Heart left ventricle (tissue), 16 donors: ENCODE measurements at regions of chr1 and their contacts with region 1.

Region 1: GRCh38 chr1:180252638-180253536 is 22.8 kb downstream of the LHX4 start:
- DNase-seq: peak; percentile 63 to 86 (median 67)
- ATAC-seq: peak in 3 of 4 donors; percentile 51 to 56 (median 53)
- H3K4me3 ChIP-seq: no peak overlapping the region
- H3K27ac ChIP-seq: no peak overlapping the region
- H3K4me1 ChIP-seq: no peaks in the 10 kb centered on the region
- H3K27me3 ChIP-seq: peaks cover 0 to 56% (median 10%) of the 10 kb centered on the region in 9 donors
- CTCF ChIP-seq: peak; percentile 64 to 80 (median 72)
- POLR2A ChIP-seq: no peak

Region 2: GRCh38 chr1:180415985-180416633 is 163.2 kb after region 1 on chr1:
- intact Hi-C with region 1: loop called (anchors 1 to 10 kb)
- DNase-seq: no peak
- ATAC-seq: no peak
- H3K4me3 ChIP-seq: no peak overlapping the region
- H3K27ac ChIP-seq: no peak overlapping the region
- H3K4me1 ChIP-seq: no peaks in the 10 kb centered on the region
- H3K27me3 ChIP-seq: no peaks in the 10 kb centered on the region
- CTCF ChIP-seq: peak; percentile 37 to 66 (median 56)
- POLR2A ChIP-seq: no peak

Region 3: GRCh38 chr1:180482425-180483275 is 229.8 kb after region 1 on chr1:
- intact Hi-C with region 1: loop called in 9 of 10 experiments (anchors 2 to 5 kb)
- DNase-seq: no peak
- ATAC-seq: no peak
- H3K4me3 ChIP-seq: no peak overlapping the region
- H3K27ac ChIP-seq: no peak overlapping the region
- H3K4me1 ChIP-seq: peaks cover 0 to 4% (median 0%) of the 10 kb centered on the region in 12 donors
- H3K27me3 ChIP-seq: no peaks in the 10 kb centered on the region
- CTCF ChIP-seq: peak; percentile 59 to 86 (median 74)
- POLR2A ChIP-seq: no peak